ENCODE measurements at regions of chr4 and their contacts with region 1.

Region 1: DNA sequence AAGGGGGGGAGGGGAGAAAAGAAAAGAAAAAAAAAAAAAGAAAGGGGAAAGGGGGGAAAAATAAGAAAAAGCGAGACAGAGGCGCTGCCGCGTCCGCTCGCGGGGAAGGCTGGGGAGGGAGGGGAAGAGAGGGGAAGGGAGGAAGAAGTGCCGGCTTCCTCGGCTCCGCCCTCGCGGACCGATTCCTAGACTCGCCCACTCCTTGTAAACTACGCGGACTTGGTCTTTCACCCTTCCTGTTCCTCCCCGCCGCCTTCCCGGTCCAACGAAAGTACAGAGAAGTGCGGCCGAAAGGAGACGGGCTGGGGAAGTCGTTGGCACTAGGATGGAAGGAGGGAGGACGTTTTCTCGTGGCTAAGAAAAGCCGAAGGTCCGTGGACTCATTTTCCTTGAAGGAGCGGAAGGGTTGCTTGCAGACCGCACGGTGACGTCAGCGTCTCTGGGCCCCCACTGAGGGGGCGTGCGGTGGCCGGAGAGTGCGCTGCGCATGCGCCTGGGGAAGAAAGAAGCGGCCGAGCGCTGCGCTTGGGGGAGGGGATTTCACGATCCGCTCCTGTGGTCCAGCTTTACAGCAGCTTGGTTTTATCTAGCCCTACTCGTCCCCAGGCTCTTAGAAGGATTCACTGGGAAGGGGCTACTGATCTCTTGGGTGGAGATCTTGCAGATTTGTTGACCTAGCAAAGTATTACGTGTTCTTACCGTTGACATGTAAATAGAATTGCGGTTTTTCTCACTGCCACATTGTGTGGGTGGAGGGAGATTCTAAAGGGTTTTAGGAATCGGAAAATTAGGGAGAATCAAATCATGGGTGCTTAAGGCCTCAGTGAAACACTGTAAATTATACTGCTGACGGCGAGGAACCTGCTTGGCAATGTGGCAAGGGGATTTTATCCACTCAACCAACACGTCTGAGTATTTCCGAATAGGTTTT is at the start of gene CCNI:
- DNase-seq: peak; percentile 91
- H3K4me3 Mint-ChIP-seq: peak within 1 kb of the TSS; percentile 96
- H3K27ac Mint-ChIP-seq: peak within 1 kb of the TSS; percentile 100
- H3K4me1 Mint-ChIP-seq: peaks cover 42% of the 10 kb centered on the region
- H3K27me3 Mint-ChIP-seq: peaks cover 4% of the 10 kb centered on the region
- total RNA-seq, gene CCNI: 236 and 253 TPM in 2 replicates

Region 2: DNA sequence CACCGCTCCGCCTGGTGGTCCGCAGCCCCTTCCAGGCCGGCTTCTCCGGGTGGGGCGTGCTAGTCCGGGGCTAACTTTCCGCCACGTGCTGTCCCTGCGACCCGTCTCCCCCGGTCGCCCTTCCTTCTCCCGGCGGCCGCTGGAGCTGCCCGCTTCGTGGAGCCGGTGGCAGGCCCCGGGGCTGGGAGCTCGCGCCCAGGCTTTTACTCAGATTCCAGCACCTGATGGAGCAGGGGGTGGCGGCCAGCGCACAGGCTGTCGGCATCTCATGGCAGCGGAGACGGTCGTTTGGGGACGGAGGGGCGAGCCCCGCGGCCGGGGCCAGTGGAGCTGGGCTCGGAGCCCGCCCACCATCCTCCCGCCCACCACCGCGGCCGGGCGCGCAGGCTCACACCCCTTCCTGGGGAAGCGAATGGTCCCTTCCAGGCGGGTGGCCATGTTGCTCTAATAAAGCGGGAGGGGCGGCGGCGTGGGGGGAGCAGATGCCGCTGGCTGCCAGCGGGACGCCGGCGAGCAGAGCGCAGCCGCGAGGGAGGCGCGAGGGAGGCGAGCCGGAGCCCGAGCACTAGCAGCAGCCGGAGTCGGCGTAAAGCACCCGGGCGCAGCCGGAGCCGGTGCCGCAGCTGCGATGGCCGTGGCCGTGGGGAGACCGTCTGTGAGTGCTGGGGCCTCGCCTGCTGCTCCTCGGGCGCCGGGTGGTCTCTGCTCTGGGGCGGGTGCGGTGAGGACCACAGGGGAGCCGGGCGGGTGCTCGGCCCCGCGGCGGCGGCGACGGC is 126.7 kb before region 1 on chr4 and contains the start of gene SEPTIN11:
- intact Hi-C with region 1: loop called (anchors 1 kb)
- DNase-seq: peak; percentile 56
- H3K4me3 Mint-ChIP-seq: peak within 1 kb of the TSS; percentile 84
- H3K27ac Mint-ChIP-seq: peak within 1 kb of the TSS; percentile 68
- H3K4me1 Mint-ChIP-seq: peaks cover 14% of the 10 kb centered on the region
- H3K27me3 Mint-ChIP-seq: peaks cover 77% of the 10 kb centered on the region
- total RNA-seq, gene SEPTIN11: 22.4 and 23.6 TPM in 2 replicates

Region 3: DNA sequence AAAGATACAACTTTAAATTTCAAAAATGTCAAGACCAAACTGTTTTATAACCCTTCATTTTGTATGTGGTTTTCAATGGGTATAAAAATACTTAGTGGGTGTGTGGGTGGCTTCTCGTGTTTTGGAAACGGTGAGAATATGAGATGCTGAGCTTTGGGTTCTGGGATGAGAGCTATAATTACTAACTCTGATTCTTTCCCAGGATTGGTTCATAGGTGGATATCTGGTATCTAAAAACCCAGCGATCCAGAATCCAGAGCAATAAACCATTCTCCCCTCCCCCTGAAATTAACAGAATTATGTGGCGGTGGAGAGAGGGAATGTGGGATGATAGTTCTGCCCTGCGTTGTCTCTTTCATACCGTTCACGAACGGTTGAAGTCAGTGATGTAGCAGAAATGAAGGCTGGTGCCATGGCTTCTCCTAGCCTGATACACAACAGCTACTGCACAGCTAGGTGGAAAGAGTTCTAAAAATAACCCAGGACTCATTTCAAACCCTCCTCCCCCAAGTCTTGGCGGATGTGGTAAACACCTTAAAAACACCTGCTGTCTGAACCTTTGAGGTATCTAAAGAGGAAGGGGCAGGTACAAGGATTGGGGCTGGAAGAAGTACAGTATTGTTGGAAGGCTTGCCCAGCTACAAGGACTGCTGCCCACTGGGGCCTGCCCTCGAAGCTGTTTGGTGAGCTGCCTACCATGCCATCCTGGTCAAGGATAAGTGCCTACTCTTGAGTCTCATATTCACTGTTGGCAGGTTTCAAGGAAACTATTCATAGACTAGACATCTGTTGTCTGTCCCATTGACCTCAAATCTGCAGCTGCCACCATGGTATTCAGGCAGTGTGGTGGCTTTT is 82.1 kb before region 1 on chr4:
- intact Hi-C with region 1: loop called (anchors 1 kb)
- DNase-seq: peak; percentile 54
- H3K4me3 Mint-ChIP-seq: peak overlapping the region; percentile 63
- H3K27ac Mint-ChIP-seq: peak overlapping the region; percentile 70
- H3K4me1 Mint-ChIP-seq: peaks cover 48% of the 10 kb centered on the region
- H3K27me3 Mint-ChIP-seq: peaks cover 7% of the 10 kb centered on the region

Region 4: DNA sequence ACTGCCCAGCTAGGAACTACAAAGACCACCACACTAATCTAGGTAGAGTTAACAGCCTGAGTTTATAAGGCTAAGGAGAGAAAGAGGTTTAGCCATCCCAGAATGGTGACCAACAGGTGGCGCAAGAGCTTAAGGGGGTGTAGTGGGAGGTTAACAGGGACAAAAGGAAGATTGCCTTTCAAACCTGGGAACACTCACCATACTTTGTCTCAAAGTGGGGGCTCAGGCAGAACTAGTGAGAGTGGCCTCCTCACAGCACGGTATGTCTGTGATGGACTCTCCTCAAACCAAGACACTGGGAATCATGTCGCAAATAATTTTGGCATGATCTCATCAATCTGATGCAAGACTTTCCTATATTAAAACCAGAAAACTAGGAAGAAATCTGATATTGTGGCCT is 23.8 kb before region 1 on chr4:
- intact Hi-C with region 1: loop called (anchors 2 kb)
- DNase-seq: peak; percentile 29
- H3K4me3 Mint-ChIP-seq: no peak overlapping the region
- H3K27ac Mint-ChIP-seq: no peak overlapping the region
- H3K4me1 Mint-ChIP-seq: peaks cover 6% of the 10 kb centered on the region
- H3K27me3 Mint-ChIP-seq: no peaks in the 10 kb centered on the region

Region 5: DNA sequence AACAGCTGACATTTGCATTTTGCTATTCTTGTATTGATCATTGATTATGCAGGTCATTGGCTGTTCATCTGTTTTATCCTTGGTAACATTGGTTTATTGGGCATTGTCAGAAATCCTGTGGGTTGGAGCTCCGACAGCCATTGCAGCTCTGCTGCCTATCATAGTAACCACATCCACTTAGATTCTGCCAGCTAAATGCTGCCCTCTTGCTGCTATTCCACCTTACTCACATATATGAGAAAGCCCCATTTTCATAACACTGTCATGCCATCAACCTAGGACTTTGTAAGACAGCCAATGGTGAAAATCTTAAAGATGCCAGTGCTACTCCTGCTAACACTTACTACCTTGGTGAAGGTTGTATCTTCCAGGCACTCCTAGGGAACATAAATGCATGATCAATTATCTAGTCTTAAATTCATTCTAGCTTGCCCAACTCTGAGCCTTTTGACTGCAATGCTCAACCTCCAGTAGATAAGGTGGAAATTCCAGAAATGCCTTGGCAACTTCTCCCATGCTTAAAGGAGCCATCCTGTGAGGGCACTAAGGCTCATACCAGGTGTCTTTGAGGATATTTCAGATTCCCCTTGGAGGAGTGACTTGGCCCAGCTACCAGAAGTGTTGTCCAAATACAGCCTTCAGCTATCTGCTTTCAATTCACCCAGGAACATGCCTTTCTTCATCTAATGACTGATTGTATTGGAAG is 342.4 kb after region 1 on chr4:
- intact Hi-C with region 1: no loop called
- DNase-seq: no peak
- H3K4me3 Mint-ChIP-seq: no peak overlapping the region
- H3K27ac Mint-ChIP-seq: no peak overlapping the region
- H3K4me1 Mint-ChIP-seq: no peaks in the 10 kb centered on the region
- H3K27me3 Mint-ChIP-seq: peaks cover 18% of the 10 kb centered on the region

Region 6: DNA sequence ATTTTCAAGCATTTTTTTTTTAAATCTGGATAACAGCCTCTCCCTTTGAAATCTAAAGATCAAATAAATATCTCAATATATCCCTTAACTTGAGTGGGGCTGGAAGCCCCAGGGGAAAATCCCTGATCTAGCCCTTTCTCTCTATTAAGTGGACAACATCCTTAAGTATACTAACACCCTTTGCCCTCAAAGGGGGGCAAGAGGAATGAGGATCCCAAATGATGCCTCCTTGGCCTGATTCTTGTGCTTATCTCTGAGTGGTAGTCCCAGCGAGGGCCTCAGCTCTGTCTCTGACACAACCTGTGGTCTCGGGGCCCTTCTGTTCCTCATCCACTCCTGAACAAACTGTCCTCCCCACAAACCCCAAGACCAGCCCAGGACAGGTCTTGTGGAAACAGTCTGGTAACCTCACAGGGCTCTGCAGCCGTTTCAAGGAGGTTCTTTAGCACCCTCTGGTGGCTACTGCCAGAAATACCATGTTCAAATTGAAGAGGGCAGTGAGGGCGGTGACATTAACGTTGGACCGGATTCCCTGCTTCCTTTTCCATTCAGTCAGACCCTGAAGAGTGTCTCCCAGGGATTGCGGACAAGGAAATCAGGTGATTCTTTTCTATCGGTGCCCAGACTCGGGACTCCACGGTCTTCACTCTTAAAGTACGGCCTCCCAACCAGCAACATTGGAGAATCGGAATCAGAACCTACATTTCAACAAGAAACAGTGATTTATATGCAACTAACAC is 542.4 kb after region 1 on chr4:
- intact Hi-C with region 1: no loop called
- DNase-seq: peak; percentile 45
- H3K4me3 Mint-ChIP-seq: no peak overlapping the region
- H3K27ac Mint-ChIP-seq: peak overlapping the region; percentile 19
- H3K4me1 Mint-ChIP-seq: peaks cover 7% of the 10 kb centered on the region
- H3K27me3 Mint-ChIP-seq: peaks cover 24% of the 10 kb centered on the region

Region 7: DNA sequence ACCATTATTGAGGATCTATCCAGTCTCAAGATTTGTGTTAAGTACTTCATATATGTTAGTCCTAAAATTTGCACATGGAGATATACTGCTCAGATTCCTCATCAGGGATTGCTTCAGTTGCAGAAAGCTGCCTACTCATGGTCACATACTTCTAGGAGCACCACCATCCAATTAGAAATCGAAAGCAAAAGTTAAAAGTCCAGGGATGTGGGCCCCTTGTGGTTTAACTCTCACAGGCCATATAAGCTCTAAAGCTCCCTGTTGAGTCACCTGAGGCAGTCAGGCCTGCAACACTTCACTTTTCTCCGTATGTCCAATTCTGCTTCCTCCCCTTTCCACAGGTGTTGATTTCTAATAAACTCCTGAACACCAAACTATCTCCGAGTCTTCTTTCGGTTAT is 658.8 kb after region 1 on chr4:
- intact Hi-C with region 1: loop called (anchors 10 kb)
- DNase-seq: peak; percentile 50
- H3K4me3 Mint-ChIP-seq: peak overlapping the region; percentile 67
- H3K27ac Mint-ChIP-seq: peak overlapping the region; percentile 49
- H3K4me1 Mint-ChIP-seq: peaks cover 79% of the 10 kb centered on the region
- H3K27me3 Mint-ChIP-seq: no peaks in the 10 kb centered on the region

Region 8: GRCh38 chr4:77852892-77853495 is 776.9 kb after region 1 on chr4:
- intact Hi-C with region 1: loop called (anchors 10 kb)
- DNase-seq: peak; percentile 72
- H3K4me3 Mint-ChIP-seq: peak overlapping the region; percentile 56
- H3K27ac Mint-ChIP-seq: peak overlapping the region; percentile 93
- H3K4me1 Mint-ChIP-seq: peaks cover 56% of the 10 kb centered on the region
- H3K27me3 Mint-ChIP-seq: no peaks in the 10 kb centered on the region

Measured in activated T-helper 1 cell treated with anti-CD3 and anti-CD28 coated beads, Interleukin-12 subunit alpha, Interleukin-12 subunit beta, Interleukin-2, Interleukin-4 antibody, amounts not matched to agents 30 ng/mL and 10 ng/mL and 1 ng/mL, durations not matched to agents 14 hours and 24 hours and 36 hours (primary cell).